ENCODE measurements at regions of chr10 and their contacts with region 1.

Region 1: GRCh38 chr10:63083904-63084689 is 49.0 kb upstream of the NRBF2 start:
- DNase-seq: peak; percentile 77
- ATAC-seq: peak; percentile 95
- H3K4me3 ChIP-seq: no peak overlapping the region
- H3K27ac ChIP-seq: no peak overlapping the region
- H3K4me1 ChIP-seq: no peaks in the 10 kb centered on the region; the same call in 1 of the 2 replicates
- H3K27me3 ChIP-seq: no peaks in the 10 kb centered on the region; the same call in 1 of the 2 replicates
- CTCF ChIP-seq: peak; percentile 74
- POLR2A ChIP-seq: no peak
- RAD21 ChIP-seq: peak; percentile 81

Region 2: GRCh38 chr10:62554632-62555199 is 529.4 kb before region 1 on chr10:
- CTCF ChIA-PET with region 1: no interaction called
- POLR2A ChIA-PET with region 1: no interaction called
- dilution Hi-C with region 1: no loop called
- in situ Hi-C with region 1: no loop called
- intact Hi-C with region 1: loop called (anchors 2 kb)
- DNase-seq: peak; percentile 52
- ATAC-seq: peak; percentile 61
- H3K4me3 ChIP-seq: no peak overlapping the region
- H3K27ac ChIP-seq: no peak overlapping the region
- H3K4me1 ChIP-seq: peaks cover 3% of the 10 kb centered on the region
- H3K27me3 ChIP-seq: peaks cover 8% of the 10 kb centered on the region
- CTCF ChIP-seq: peak; percentile 59
- POLR2A ChIP-seq: no peak
- RAD21 ChIP-seq: peak; percentile 69

Region 3: DNA sequence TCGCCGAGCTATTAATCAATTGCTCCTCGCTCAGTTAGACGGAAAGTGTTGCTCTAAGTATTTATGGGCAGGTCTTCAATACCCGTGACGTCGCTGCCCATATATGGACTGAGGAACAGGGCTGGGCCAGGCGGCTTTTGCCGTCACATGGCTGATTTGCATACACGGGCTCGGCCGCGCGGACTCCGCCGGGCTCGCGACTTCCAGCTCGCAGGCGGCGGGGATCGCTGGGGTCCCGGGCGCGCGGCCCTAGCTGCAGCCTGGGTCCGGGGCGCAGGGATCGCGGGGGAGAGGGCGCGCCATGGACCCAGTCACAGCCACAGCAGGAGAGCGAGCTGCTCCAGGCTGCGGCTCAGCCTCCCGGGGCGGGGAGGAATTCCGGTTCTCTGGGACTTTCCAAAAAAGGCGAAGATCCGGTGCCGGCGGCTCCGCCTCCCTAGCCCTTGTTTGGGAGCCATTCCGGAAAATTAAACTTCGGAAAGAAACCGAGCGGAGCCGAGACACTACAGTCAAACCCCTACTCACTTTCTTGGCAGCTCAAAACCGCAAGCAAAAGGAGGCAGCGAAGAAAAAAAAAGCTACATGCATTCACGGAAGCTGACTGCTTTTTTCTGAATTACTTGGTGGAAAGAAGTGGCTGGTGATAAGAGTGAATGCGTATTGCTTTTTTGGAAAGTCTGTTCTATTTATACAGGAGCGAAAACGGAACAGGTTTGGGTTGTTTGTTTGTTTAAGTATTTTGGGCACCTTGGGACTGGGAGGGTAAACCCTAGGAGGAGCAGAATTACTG is 267.6 kb before region 1 on chr10 and contains the start of gene EGR2:
- CTCF ChIA-PET with region 1: interaction called, 3 read pairs
- POLR2A ChIA-PET with region 1: no interaction called
- dilution Hi-C with region 1: no loop called
- in situ Hi-C with region 1: no loop called
- intact Hi-C with region 1: loop called (anchors 5 kb)
- DNase-seq: peak; percentile 94
- ATAC-seq: peak; percentile 91
- H3K4me3 ChIP-seq: peak within 1 kb of the TSS; percentile 73
- H3K27ac ChIP-seq: peak within 1 kb of the TSS; percentile 53
- H3K4me1 ChIP-seq: peaks cover 7% of the 10 kb centered on the region; the same call in 1 of the 2 replicates
- H3K27me3 ChIP-seq: peaks cover 48% of the 10 kb centered on the region
- CTCF ChIP-seq: no peak
- POLR2A ChIP-seq: peak; percentile 50
- RAD21 ChIP-seq: no peak
- total RNA-seq, gene EGR2: 0.36 and 0.56 TPM in 2 replicates

Region 4: DNA sequence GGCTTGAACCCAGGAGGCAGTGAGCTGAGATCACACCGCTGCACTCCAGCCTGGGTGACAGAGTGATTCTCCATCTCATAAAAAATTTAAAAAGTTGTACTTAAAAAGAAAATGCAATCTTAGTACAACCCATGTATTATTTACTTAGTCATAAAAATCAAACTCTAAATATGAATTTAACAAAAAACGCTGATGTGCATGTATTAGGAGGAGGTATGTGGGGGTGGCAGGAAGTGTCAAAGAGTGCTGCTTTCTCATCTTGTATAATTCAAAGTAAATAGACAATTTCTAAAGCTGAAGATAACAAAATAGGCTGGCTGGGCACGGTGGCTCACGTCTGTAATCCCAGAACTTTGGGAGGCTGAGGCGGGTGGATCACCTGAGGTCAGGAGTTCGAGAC is 32.0 kb before region 1 on chr10:
- CTCF ChIA-PET with region 1: no interaction called
- POLR2A ChIA-PET with region 1: no interaction called
- dilution Hi-C with region 1: no loop called
- in situ Hi-C with region 1: no loop called
- intact Hi-C with region 1: no loop called
- DNase-seq: no peak
- ATAC-seq: no peak
- H3K4me3 ChIP-seq: no peak overlapping the region
- H3K27ac ChIP-seq: no peak overlapping the region
- H3K4me1 ChIP-seq: no peaks in the 10 kb centered on the region
- H3K27me3 ChIP-seq: peaks cover 2% of the 10 kb centered on the region
- CTCF ChIP-seq: no peak
- POLR2A ChIP-seq: no peak
- RAD21 ChIP-seq: no peak

Region 5: DNA sequence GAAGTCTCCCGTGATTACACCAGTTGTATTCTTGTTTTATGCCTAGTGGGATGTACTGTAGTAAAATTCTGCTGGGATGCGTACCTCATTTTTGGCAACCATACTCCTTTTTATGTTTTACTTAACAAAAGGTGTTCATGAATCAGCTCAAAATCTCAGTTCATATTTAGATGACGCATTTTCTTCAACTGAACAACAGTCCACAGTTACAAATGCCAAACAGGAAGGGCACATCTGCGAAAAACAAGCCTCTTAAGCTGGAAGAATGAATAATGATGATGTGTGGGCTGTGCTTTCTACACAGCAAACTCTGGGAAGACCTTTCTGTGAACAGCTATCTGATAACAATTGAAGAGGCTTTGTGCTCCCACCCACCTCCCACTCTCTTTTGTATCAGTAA is 19.4 kb before region 1 on chr10:
- CTCF ChIA-PET with region 1: no interaction called
- POLR2A ChIA-PET with region 1: no interaction called
- dilution Hi-C with region 1: no loop called
- in situ Hi-C with region 1: no loop called
- intact Hi-C with region 1: no loop called
- DNase-seq: no peak
- ATAC-seq: no peak
- H3K4me3 ChIP-seq: no peak overlapping the region
- H3K27ac ChIP-seq: no peak overlapping the region
- H3K4me1 ChIP-seq: no peaks in the 10 kb centered on the region
- H3K27me3 ChIP-seq: peaks cover 6% of the 10 kb centered on the region; the same call in 1 of the 2 replicates
- CTCF ChIP-seq: no peak
- POLR2A ChIP-seq: no peak
- RAD21 ChIP-seq: no peak